GM12878 (cell line): ENCODE measurements at regions of chr7 and their contacts with region 1.

Region 1: GRCh38 chr7:86469680-86470295 is 173.9 kb upstream of the GRM3 start:
- DNase-seq: peak; percentile 27
- ATAC-seq: peak; percentile 96
- H3K4me3 ChIP-seq: no peak overlapping the region
- H3K27ac ChIP-seq: no peak overlapping the region
- H3K4me1 ChIP-seq: no peaks in the 10 kb centered on the region
- H3K27me3 ChIP-seq: no peaks in the 10 kb centered on the region
- CTCF ChIP-seq: peak; percentile 67 to 81 (median 79)
- EP300 ChIP-seq: no peak
- POLR2A ChIP-seq: no peak
- RAD21 ChIP-seq: peak; percentile 86

Region 2: DNA sequence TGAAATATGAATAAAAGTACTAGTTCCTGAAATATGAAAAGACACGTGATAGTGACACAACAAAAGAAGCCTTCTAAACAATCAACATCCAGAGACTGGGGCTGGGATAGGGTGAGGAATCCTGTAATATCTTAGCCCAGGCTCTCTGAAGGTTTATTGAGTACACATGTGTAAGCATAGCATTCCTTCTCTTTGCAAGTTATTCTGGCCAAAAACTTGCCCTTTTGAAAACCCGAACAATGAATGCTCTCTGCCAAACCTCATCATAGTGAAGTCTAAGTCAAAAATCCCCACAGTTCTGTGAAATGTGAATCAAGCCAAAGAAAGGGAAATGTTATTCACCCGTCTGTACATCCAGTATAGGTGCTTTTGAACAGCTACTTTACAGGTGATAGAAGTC is 1294.6 kb before region 1 on chr7:
- CTCF ChIA-PET with region 1: no interaction called
- POLR2A ChIA-PET with region 1: no interaction called
- RAD21 ChIA-PET with region 1: no interaction called
- SMC1A ChIA-PET with region 1: no interaction called
- in situ Hi-C with region 1: no loop called
- intact Hi-C with region 1: loop called (anchors 5 kb)
- DNase-seq: no peak
- ATAC-seq: no peak
- H3K4me3 ChIP-seq: no peak overlapping the region
- H3K27ac ChIP-seq: no peak overlapping the region
- H3K4me1 ChIP-seq: no peaks in the 10 kb centered on the region
- H3K27me3 ChIP-seq: no peaks in the 10 kb centered on the region
- CTCF ChIP-seq: no peak
- EP300 ChIP-seq: no peak
- POLR2A ChIP-seq: no peak
- RAD21 ChIP-seq: no peak

Region 3: DNA sequence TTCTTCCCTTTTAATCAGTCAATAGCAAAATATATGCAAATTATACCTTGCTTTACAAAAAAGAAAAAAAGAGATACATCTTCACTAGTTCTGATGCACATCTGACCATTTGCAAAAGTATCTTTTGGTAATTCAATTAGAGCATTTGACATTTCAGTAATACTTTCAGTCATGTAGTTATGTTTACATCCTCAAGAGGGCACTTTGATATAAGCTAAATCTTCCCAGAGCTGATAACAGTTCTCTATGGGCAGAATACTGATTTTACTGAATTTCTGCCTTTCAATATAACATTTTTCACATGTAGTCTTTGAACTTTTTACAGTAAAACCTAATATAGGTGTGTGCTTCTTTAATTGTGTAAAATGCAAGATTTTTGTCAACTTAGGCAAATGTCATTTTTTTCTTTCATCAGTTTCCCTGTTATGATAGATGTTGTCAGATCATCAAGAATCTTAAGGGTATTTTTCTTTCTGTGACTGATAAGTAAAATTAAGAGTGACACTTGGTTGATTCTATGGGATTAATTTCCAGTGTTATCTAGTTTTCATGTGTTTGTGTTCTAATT is 579.5 kb before region 1 on chr7:
- CTCF ChIA-PET with region 1: interaction called, 46 read pairs
- POLR2A ChIA-PET with region 1: no interaction called
- RAD21 ChIA-PET with region 1: interaction called, 26 read pairs
- SMC1A ChIA-PET with region 1: interaction called, 29 read pairs
- in situ Hi-C with region 1: loop called (anchors 5 kb)
- intact Hi-C with region 1: loop called (anchors 1 kb)
- DNase-seq: no peak
- ATAC-seq: peak; percentile 66
- H3K4me3 ChIP-seq: no peak overlapping the region
- H3K27ac ChIP-seq: no peak overlapping the region
- H3K4me1 ChIP-seq: no peaks in the 10 kb centered on the region
- H3K27me3 ChIP-seq: no peaks in the 10 kb centered on the region
- CTCF ChIP-seq: peak; percentile 42 to 57 (median 55); a peak in 5 of 6 replicates
- EP300 ChIP-seq: no peak
- POLR2A ChIP-seq: no peak
- RAD21 ChIP-seq: peak; percentile 77

Region 4: GRCh38 chr7:85950418-85950817 is 519.4 kb before region 1 on chr7:
- CTCF ChIA-PET with region 1: no interaction called
- POLR2A ChIA-PET with region 1: no interaction called
- RAD21 ChIA-PET with region 1: no interaction called
- SMC1A ChIA-PET with region 1: no interaction called
- in situ Hi-C with region 1: no loop called
- intact Hi-C with region 1: no loop called
- DNase-seq: no peak
- ATAC-seq: no peak
- H3K4me3 ChIP-seq: no peak overlapping the region
- H3K27ac ChIP-seq: no peak overlapping the region
- H3K4me1 ChIP-seq: no peaks in the 10 kb centered on the region
- H3K27me3 ChIP-seq: no peaks in the 10 kb centered on the region
- CTCF ChIP-seq: no peak
- EP300 ChIP-seq: no peak
- POLR2A ChIP-seq: no peak
- RAD21 ChIP-seq: no peak